Activated CD4-positive, alpha-beta T cell treated with anti-CD3 and anti-CD28 coated beads for 36 hours (primary cell): ENCODE measurements at regions of chr3 and their contacts with region 1.

Region 1: DNA sequence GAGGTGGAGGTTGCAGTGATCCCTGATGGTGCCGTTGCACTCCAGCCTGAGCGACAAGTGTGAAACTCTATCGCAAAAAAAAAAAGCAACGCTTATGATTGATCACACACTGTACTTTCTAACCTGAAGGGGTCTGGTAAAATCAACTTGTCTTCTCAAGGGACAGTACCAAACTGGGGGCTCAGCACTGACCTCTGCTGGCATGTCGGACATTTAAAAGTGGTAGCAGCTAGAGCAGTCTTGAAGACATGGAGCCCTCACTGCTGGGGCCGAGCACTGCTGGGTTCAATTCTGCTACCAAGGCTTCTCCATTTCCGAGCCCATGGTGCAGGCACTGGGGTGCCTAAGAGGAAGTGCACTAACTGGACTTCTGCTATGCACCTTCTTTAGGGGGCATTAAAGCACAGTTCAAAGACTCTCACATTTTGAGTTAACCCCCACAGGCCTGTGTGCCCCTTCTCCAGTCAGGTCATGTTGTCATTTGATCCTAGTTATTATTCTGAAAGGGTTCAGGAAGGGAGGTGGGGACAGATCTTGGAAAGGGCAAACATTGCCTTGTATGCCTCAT is 26.4 kb upstream of the LAMP3 start:
- DNase-seq: peak; percentile 56
- ATAC-seq: peak; percentile 33
- H3K4me3 Mint-ChIP-seq: no peak overlapping the region
- H3K27ac Mint-ChIP-seq: no peak overlapping the region
- H3K4me1 Mint-ChIP-seq: peaks cover 20% of the 10 kb centered on the region
- H3K27me3 Mint-ChIP-seq: no peaks in the 10 kb centered on the region

Region 2: GRCh38 chr3:182979103-182979673 is 209.8 kb before region 1 on chr3:
- CTCF ChIA-PET with region 1: no interaction called
- POLR2A ChIA-PET with region 1: no interaction called
- intact Hi-C with region 1: no loop called
- DNase-seq: no peak
- ATAC-seq: peak; percentile 13
- H3K4me3 Mint-ChIP-seq: peak overlapping the region; percentile 95
- H3K27ac Mint-ChIP-seq: peak overlapping the region; percentile 92
- H3K4me1 Mint-ChIP-seq: peaks cover 29% of the 10 kb centered on the region
- H3K27me3 Mint-ChIP-seq: no peaks in the 10 kb centered on the region

Region 3: GRCh38 chr3:183210839-183211341 is 21.9 kb after region 1 on chr3:
- CTCF ChIA-PET with region 1: interaction called, 19 read pairs
- POLR2A ChIA-PET with region 1: no interaction called
- intact Hi-C with region 1: no loop called
- DNase-seq: peak; percentile 68
- ATAC-seq: peak; percentile 66
- H3K4me3 Mint-ChIP-seq: no peak overlapping the region
- H3K27ac Mint-ChIP-seq: peak overlapping the region; percentile 72
- H3K4me1 Mint-ChIP-seq: peaks cover 63% of the 10 kb centered on the region
- H3K27me3 Mint-ChIP-seq: no peaks in the 10 kb centered on the region

Region 4: DNA sequence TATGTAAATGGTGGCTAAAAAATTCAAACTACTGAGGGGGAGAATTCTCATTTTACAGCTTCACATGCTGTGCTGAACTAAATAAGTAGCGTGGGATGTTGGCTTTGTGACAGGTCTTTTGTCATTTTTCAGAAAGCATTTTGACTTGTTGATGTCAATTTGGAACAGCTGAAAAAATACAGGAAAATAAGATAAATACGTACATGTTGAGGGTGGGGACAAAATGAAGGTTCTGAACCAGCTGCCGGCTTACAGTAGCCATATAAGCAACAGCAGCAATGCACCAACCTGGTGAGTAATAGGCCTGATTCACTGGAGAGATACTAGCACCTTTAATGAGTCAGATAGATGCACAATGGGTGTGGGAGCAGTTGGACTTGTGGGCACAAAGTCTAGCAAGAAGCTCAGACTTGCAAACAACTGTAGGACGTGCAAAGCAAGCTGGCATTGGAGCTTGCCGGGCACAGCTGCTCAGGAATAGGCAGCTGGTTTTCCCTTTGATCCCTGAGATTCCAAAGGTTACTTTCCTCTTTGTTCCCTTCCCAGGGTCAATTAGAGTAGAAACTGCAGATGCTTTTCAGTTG is 76.9 kb after region 1 on chr3:
- CTCF ChIA-PET with region 1: interaction called, 12 read pairs
- POLR2A ChIA-PET with region 1: interaction called, 5 read pairs
- intact Hi-C with region 1: loop called (anchors 5 kb)
- DNase-seq: peak; percentile 75
- ATAC-seq: peak; percentile 98
- H3K4me3 Mint-ChIP-seq: no peak overlapping the region
- H3K27ac Mint-ChIP-seq: no peak overlapping the region
- H3K4me1 Mint-ChIP-seq: peaks cover 2% of the 10 kb centered on the region
- H3K27me3 Mint-ChIP-seq: no peaks in the 10 kb centered on the region

Region 5: DNA sequence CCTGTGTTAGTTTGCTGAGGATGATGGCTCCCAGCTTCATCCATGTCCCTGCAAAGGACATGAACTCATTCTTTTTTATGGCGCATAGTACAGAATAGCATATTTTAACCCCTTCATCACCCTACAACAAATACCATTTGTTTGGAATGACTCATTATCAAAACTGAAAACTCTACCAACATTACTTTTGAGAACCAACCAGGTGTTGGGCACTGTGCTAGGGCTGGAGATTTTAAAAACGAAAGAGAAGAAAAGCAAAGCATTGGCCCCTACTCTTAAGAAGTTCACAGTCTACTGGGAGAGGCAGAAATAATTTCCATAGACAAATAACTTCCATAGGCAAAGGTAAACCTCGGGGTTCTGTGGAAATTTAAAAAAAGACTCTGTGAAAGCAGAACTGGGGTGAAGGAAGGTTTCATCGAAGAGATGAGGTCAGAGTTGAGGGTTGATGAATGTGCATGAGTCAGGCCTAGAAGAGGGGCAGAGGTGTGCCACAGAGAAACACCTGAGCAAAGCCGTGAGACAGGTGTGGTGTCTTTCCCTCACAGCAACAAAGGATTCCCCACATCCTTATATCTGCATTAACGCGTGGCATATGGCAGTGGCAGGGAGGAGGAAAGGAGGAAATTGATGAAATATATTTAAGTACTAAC is 188.5 kb after region 1 on chr3:
- CTCF ChIA-PET with region 1: interaction called, 257 read pairs
- POLR2A ChIA-PET with region 1: interaction called, 3 read pairs
- intact Hi-C with region 1: loop called (anchors 1 kb)
- DNase-seq: peak; percentile 24
- ATAC-seq: peak; percentile 77
- H3K4me3 Mint-ChIP-seq: no peak overlapping the region
- H3K27ac Mint-ChIP-seq: peak overlapping the region; percentile 58
- H3K4me1 Mint-ChIP-seq: peaks cover 43% of the 10 kb centered on the region
- H3K27me3 Mint-ChIP-seq: no peaks in the 10 kb centered on the region

Region 6: DNA sequence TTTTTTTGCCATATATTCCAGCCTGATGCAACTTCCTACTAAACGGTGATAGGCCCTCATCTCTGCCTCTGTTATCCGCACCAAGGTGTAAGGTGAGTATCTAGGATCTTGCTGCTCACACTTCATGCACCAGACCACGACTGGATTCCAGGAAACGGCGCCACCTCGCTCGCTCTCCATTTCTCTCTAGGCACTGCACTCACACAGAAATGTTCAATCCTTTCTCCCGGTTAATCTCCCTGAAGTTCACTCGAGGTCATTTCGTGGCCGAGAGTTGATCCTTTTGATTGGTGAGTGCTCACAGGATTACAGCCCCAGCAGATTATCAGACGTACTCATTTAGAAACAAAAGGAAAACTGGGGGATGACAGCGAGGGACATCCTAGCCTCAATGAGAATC is 211.4 kb after region 1 on chr3:
- CTCF ChIA-PET with region 1: interaction called, 13 read pairs
- POLR2A ChIA-PET with region 1: no interaction called
- intact Hi-C with region 1: no loop called
- DNase-seq: no peak
- ATAC-seq: no peak
- H3K4me3 Mint-ChIP-seq: no peak overlapping the region
- H3K27ac Mint-ChIP-seq: no peak overlapping the region
- H3K4me1 Mint-ChIP-seq: peaks cover 7% of the 10 kb centered on the region
- H3K27me3 Mint-ChIP-seq: no peaks in the 10 kb centered on the region

Region 7: GRCh38 chr3:183490670-183491069 is 301.7 kb after region 1 on chr3:
- CTCF ChIA-PET with region 1: no interaction called
- POLR2A ChIA-PET with region 1: no interaction called
- intact Hi-C with region 1: no loop called
- DNase-seq: peak; percentile 27
- ATAC-seq: peak; percentile 43
- H3K4me3 Mint-ChIP-seq: no peak overlapping the region
- H3K27ac Mint-ChIP-seq: peak overlapping the region; percentile 38
- H3K4me1 Mint-ChIP-seq: peaks cover 6% of the 10 kb centered on the region
- H3K27me3 Mint-ChIP-seq: no peaks in the 10 kb centered on the region

Region 8: GRCh38 chr3:183548262-183548769 is 359.3 kb after region 1 on chr3:
- CTCF ChIA-PET with region 1: no interaction called
- POLR2A ChIA-PET with region 1: no interaction called
- intact Hi-C with region 1: no loop called
- DNase-seq: no peak
- ATAC-seq: no peak
- H3K4me3 Mint-ChIP-seq: no peak overlapping the region
- H3K27ac Mint-ChIP-seq: peak overlapping the region; percentile 23
- H3K4me1 Mint-ChIP-seq: peaks cover 76% of the 10 kb centered on the region
- H3K27me3 Mint-ChIP-seq: no peaks in the 10 kb centered on the region